Mammary epithelial cell (primary cell): ENCODE measurements at regions of chr10 and their contacts with region 1.

Region 1: DNA sequence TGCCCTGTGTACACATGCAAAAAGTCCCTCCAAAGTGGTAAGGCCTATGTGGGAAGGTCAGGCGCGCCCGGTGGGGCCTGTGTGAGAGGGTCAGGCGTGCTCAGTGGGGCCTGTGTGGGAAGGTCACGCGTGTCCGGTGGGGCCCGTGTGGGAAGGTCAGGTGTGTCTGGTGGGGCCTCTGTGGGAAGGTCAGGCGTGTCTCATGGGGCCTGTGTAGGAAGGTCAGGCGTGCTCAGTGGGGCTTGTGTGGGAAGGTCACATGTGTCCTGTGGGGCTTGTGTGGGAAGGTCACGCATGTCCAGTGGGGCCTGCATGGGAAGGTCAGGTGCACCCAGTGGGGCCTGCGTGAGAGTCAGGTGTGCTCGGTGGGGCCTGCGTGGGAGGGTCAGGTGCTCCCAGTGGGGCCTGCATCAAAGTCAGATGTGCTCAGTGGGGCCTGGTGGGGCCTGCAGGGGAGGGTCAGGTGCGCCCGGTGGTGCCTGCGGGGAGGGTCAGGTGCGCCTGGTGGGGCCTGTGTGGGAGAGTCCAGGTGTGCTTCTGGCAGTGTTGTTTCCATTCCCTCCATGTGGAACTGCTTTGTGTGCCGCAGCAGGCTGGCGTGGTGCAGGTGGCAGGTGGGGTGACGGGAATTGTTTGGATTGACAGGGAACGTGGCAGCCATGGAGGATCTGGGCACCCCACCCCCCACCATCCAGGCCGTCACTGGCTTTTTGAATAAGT is 15.4 kb downstream of the LRRC27 start:
- DNase-seq: no peak
- H3K4me3 ChIP-seq: no peak overlapping the region
- H3K27ac ChIP-seq: no peak overlapping the region
- H3K4me1 ChIP-seq: no peaks in the 10 kb centered on the region
- H3K27me3 ChIP-seq: no peaks in the 10 kb centered on the region
- CTCF ChIP-seq: no peak

Region 2: GRCh38 chr10:132223156-132223590 is 124.2 kb before region 1 on chr10:
- CTCF ChIA-PET with region 1: no interaction called
- dilution Hi-C with region 1: no loop called
- in situ Hi-C with region 1: no loop called
- intact Hi-C with region 1: loop called (anchors 1 kb)
- DNase-seq: peak; percentile 55
- H3K4me3 ChIP-seq: no peak overlapping the region
- H3K27ac ChIP-seq: no peak overlapping the region
- H3K4me1 ChIP-seq: no peaks in the 10 kb centered on the region
- H3K27me3 ChIP-seq: no peaks in the 10 kb centered on the region
- CTCF ChIP-seq: peak; percentile 97 to 99

Region 3: DNA sequence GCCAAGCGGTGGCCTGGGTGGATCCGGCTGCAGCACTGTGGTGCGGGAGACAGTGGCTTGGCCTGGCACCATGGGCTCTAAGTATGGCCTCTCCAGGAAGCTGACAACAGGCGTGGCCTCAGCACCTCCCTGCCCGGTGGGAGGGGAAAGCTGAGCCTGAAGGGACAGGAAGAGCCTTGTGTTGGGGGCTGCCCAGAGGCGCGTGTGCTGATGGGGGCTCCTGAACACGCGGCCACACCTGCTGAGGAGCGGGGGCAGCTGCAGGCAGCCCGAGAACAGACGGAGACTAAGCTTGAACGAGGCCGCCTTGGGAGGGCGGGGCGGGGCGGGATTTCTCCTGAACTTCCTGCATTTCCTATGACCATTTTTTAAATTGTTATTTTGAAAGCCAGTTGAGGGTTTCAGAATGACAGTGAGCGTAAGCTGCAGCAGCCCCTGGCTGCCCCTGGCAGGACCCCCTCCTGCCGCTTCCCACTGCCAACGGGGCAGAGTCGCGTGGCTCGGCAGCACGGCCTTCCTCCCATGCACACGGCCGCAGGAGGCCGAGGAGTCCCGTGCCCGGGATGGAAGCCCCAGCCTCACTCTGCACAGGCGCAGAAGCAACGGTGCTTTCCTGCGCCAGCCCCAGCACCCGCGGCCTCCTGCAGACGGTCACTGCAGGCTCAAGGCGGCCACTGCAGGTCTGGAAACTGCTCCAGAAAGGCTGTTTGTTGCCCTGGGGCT is 117.4 kb before region 1 on chr10:
- CTCF ChIA-PET with region 1: no interaction called
- dilution Hi-C with region 1: loop called (anchors 10 kb)
- in situ Hi-C with region 1: loop called in 1 of 2 experiments (anchors 10 kb)
- intact Hi-C with region 1: no loop called
- DNase-seq: no peak
- H3K4me3 ChIP-seq: peak overlapping the region in 2 of 3 experiments; percentile 2 to 11
- H3K27ac ChIP-seq: no peak overlapping the region
- H3K4me1 ChIP-seq: peaks cover 4% of the 10 kb centered on the region
- H3K27me3 ChIP-seq: no peaks in the 10 kb centered on the region
- CTCF ChIP-seq: no peak

Region 4: GRCh38 chr10:132279873-132280645 is 67.3 kb before region 1 on chr10:
- CTCF ChIA-PET with region 1: no interaction called
- dilution Hi-C with region 1: loop called (anchors 5 kb)
- in situ Hi-C with region 1: no loop called
- intact Hi-C with region 1: no loop called
- DNase-seq: no peak
- H3K4me3 ChIP-seq: no peak overlapping the region
- H3K27ac ChIP-seq: no peak overlapping the region
- H3K4me1 ChIP-seq: no peaks in the 10 kb centered on the region
- H3K27me3 ChIP-seq: peaks cover 6% of the 10 kb centered on the region
- CTCF ChIP-seq: no peak

Region 5: DNA sequence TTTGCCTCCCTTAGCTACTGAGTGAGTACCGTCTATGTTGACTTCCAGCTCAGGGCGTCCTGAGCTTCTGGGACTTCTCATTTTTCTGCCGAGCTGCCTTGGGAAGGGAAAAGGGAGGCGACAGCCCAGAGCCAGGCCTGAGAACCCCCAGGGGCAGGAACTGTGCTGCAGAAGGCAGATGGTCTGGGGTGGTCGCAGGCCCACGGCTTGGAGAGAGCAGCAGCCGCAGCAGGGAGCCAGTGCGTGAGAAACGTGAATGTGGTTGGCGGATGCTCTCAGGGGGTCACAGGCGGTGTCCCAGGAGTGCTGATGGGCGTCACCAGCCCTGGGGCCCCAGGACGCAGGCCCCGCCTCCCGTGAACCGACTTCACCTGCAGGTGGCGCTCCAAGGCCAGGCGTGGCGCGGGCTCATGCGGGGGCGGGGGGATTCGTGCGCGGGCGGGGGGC is 40.4 kb after region 1 on chr10:
- CTCF ChIA-PET with region 1: no interaction called
- dilution Hi-C with region 1: no loop called
- in situ Hi-C with region 1: no loop called
- intact Hi-C with region 1: no loop called
- DNase-seq: no peak
- H3K4me3 ChIP-seq: no peak overlapping the region
- H3K27ac ChIP-seq: no peak overlapping the region
- H3K4me1 ChIP-seq: no peaks in the 10 kb centered on the region
- H3K27me3 ChIP-seq: no peaks in the 10 kb centered on the region
- CTCF ChIP-seq: peak; percentile 36 to 64

Region 6: DNA sequence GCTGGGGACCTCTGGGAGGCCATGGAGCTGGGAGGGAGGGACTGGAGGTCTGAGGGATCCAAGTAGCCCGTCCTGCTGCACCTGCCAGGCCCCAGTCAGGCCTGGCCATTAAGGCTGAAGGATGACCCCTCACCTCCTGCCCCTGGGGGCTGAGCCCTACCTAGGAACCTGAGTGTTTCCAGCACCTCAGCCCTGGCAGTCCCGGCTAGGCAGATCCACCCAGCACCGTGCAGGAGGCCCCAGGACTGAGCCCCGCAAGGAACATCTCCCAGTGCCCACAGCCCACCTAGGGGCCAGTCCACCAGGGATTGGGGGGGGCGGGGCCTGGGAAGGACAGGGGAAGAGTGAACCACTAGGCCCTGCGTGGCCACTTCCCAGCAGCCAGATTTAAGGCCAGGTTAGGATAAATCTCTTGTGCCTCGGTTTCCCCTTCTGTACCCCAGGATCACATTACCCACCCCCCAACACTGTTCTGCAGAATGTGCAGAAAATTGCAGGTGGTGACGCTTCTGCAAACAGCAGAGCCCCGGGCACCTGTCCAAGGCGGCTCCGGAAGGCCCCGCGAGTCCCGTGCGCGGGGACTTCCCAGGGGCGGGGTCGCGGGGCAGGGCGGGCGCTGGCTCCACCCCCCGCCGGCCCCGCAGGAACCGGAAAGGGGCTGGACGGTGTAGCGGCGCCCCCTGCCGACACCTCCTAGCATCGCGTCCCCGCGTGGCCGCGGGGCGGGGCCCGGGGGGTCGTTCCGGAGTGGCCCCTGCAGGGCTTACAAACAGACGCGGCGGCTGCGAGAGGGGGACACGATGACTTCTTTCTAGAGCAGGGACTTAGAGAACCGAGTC is 105.5 kb after region 1 on chr10:
- CTCF ChIA-PET with region 1: no interaction called
- dilution Hi-C with region 1: no loop called
- in situ Hi-C with region 1: no loop called
- intact Hi-C with region 1: loop called (anchors 1 kb)
- DNase-seq: peak; percentile 79
- H3K4me3 ChIP-seq: peak overlapping the region in 1 of 3 experiments; percentile 16
- H3K27ac ChIP-seq: no peak overlapping the region
- H3K4me1 ChIP-seq: peaks cover 17% of the 10 kb centered on the region
- H3K27me3 ChIP-seq: no peaks in the 10 kb centered on the region
- CTCF ChIP-seq: peak; percentile 69 to 88